ENCODE measurements at regions of chr17 and their contacts with region 1.

Region 1: DNA sequence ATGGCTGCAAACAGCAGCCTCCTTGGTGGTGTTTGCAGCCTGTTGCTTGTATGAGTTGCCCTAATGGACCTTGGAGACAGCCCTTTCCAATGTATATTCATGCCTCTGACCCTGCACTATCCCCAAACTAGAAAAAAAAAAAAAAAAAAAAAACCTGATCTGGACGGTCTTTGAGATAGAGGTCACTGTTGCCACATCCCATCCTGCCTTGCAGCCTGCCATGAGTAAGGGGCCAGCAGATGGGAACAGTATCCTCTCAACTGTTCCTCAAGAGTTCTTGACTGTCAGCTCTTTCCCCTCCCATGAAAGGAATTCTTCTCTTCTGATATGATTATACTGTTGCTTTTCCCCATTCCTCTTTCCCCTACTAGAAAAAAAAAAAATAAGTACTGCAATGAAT is 152.4 kb downstream of the SSH2 start:
- DNase-seq: no peak
- ATAC-seq: no peak
- H3K4me3 ChIP-seq: no peak overlapping the region
- H3K27ac ChIP-seq: no peak overlapping the region
- H3K4me1 ChIP-seq: 0 out of 2 replicates have a peak, but pooled peaks cover 3% of the 10 kb centered on the region
- H3K27me3 ChIP-seq: no peaks in the 10 kb centered on the region
- CTCF ChIP-seq: no peak

Region 2: GRCh38 chr17:29640413-29640812 is 137.2 kb before region 1 on chr17:
- CTCF ChIA-PET with region 1: interaction called, 38 read pairs
- POLR2A ChIA-PET with region 1: interaction called, 3 read pairs
- in situ Hi-C with region 1: no loop called
- intact Hi-C with region 1: loop called (anchors 1 kb)
- DNase-seq: no peak
- ATAC-seq: no peak
- H3K4me3 ChIP-seq: no peak overlapping the region
- H3K27ac ChIP-seq: no peak overlapping the region
- H3K4me1 ChIP-seq: peaks cover 6% of the 10 kb centered on the region; the same call in 1 of the 2 replicates
- H3K27me3 ChIP-seq: no peaks in the 10 kb centered on the region
- CTCF ChIP-seq: no peak

Region 3: GRCh38 chr17:29867643-29868181 is 90.0 kb after region 1 on chr17:
- CTCF ChIA-PET with region 1: no interaction called
- POLR2A ChIA-PET with region 1: no interaction called
- in situ Hi-C with region 1: no loop called
- intact Hi-C with region 1: no loop called
- DNase-seq: no peak
- ATAC-seq: no peak
- H3K4me3 ChIP-seq: no peak overlapping the region
- H3K27ac ChIP-seq: no peak overlapping the region
- H3K4me1 ChIP-seq: no peaks in the 10 kb centered on the region; the same call in none of the 2 replicates
- H3K27me3 ChIP-seq: no peaks in the 10 kb centered on the region
- CTCF ChIP-seq: peak; percentile 44; the same call in 1 of the 2 replicates

Measured in Panc1 (cell line).